ENCODE measurements at regions of chr6 and their contacts with region 1.

Region 1: DNA sequence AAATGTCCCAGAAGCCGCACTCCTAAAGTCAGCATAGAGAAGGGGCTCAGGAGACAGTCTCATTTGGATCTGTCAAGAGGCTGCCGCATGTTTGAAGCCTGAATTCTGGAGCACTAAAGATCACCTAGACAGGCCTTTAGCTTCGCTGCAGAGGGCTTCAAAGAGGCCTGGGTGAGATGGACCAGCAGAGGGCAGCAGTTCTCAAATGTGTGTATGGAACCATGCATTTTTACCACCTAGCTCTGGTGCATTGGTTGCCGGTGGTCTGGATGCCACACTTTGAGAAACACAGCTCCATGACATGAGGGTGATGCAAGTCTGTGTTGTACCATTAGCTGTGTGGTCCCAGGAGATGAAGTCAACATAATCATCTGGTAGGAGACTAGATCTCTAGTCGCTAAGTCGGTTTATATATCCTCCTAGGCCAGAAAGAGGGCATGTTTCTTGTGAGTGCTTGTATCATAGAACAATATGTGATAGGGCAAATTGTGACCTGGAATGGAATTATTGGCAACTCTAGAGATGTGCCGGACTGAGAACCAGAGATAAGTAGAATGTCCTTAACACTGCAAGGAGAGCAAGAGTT is 64.8 kb downstream of the KIAA0319 start:
- DNase-seq: peak; percentile 56 to 74 (median 66)
- H3K4me3 ChIP-seq: no peak overlapping the region
- H3K4me3 Mint-ChIP-seq: no peak overlapping the region
- H3K27ac ChIP-seq: no peak overlapping the region
- H3K27ac Mint-ChIP-seq: no peak overlapping the region
- H3K4me1 ChIP-seq: no peaks in the 10 kb centered on the region
- H3K4me1 Mint-ChIP-seq: peaks cover 0 to 3% (median under 1%) of the 10 kb centered on the region in 4 donors
- H3K27me3 ChIP-seq: no peaks in the 10 kb centered on the region
- H3K27me3 Mint-ChIP-seq: peaks cover 0 to 2% of the 10 kb centered on the region in 2 donors

Region 2: GRCh38 chr6:22631091-22631490 is 1950.1 kb before region 1 on chr6:
- CTCF ChIA-PET with region 1: no interaction called
- POLR2A ChIA-PET with region 1: no interaction called
- intact Hi-C with region 1: no loop called
- DNase-seq: no peak
- H3K4me3 ChIP-seq: no peak overlapping the region
- H3K4me3 Mint-ChIP-seq: no peak overlapping the region
- H3K27ac ChIP-seq: no peak overlapping the region
- H3K27ac Mint-ChIP-seq: no peak overlapping the region
- H3K4me1 ChIP-seq: no peaks in the 10 kb centered on the region
- H3K4me1 Mint-ChIP-seq: no peaks in the 10 kb centered on the region
- H3K27me3 ChIP-seq: no peaks in the 10 kb centered on the region
- H3K27me3 Mint-ChIP-seq: no peaks in the 10 kb centered on the region

Region 3: GRCh38 chr6:24566020-24566767 is 15.0 kb before region 1 on chr6:
- CTCF ChIA-PET with region 1: interaction called, 31 read pairs
- POLR2A ChIA-PET with region 1: no interaction called
- intact Hi-C with region 1: no loop called
- DNase-seq: no peak
- H3K4me3 ChIP-seq: no peak overlapping the region
- H3K4me3 Mint-ChIP-seq: no peak overlapping the region
- H3K27ac ChIP-seq: no peak overlapping the region
- H3K27ac Mint-ChIP-seq: no peak overlapping the region
- H3K4me1 ChIP-seq: no peaks in the 10 kb centered on the region
- H3K4me1 Mint-ChIP-seq: no peaks in the 10 kb centered on the region
- H3K27me3 ChIP-seq: no peaks in the 10 kb centered on the region
- H3K27me3 Mint-ChIP-seq: no peaks in the 10 kb centered on the region

Region 4: DNA sequence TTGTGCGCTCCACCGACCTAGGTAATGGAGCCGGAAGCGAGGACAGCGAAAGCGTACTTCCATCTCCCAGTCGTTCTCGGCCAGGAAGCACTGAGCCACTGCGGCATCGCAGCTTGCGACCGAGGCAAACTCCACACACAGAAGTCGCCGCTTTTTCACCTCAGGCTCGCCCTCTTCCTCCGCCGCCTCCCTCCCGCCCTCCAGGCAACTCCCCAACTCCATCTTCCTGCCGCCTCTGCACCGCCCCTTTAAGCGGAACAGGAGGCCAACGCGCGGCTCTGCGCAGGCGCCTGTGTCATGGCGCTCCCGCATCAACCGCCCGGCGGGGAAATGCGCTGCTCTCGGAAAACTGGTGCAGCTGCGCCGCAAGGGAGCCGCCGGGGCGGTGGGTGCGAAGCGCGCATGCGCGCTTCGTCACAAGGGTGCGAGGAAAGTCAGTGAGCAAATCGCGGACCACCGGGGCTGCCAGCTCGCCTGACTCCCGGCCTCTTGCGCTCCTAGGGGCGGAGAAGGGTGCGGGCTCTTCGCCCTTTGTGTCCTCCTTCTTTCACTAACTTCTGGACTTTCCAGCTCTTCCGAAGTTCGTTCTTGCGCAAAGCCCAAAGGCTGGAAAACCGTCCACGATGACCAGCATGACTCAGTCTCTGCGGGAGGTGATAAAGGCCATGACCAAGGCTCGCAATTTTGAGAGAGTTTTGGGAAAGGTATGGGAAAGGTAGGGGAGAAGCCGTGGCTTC is 85.6 kb after region 1 on chr6 and contains the starts of genes ACOT13 and TDP2:
- CTCF ChIA-PET with region 1: interaction called, 36 read pairs
- POLR2A ChIA-PET with region 1: interaction called, 6 read pairs
- intact Hi-C with region 1: no loop called
- DNase-seq: peak; percentile 97 to 98 (median 98)
- H3K4me3 ChIP-seq: peak within 1 kb of the TSS; percentile 79 to 97
- H3K4me3 Mint-ChIP-seq: peak within 1 kb of the TSS; percentile 96 to 100 (median 99)
- H3K27ac ChIP-seq: peak within 1 kb of the TSS; percentile 86
- H3K27ac Mint-ChIP-seq: peak within 1 kb of the TSS; percentile 95 to 100 (median 98)
- H3K4me1 ChIP-seq: peaks cover 43% of the 10 kb centered on the region
- H3K4me1 Mint-ChIP-seq: peaks cover 34 to 73% (median 51%) of the 10 kb centered on the region in 4 donors
- H3K27me3 ChIP-seq: no peaks in the 10 kb centered on the region
- H3K27me3 Mint-ChIP-seq: no peaks in the 10 kb centered on the region
- total RNA-seq, gene ACOT13: 11.1 to 12.5 TPM
- total RNA-seq, gene TDP2: 72.8 to 74.3 TPM

Region 5: GRCh38 chr6:24699521-24700359 is 118.6 kb after region 1 on chr6:
- CTCF ChIA-PET with region 1: interaction called, 185 read pairs
- POLR2A ChIA-PET with region 1: interaction called, 3 read pairs
- intact Hi-C with region 1: loop called (anchors 1 kb)
- DNase-seq: no peak
- H3K4me3 ChIP-seq: no peak overlapping the region
- H3K4me3 Mint-ChIP-seq: no peak overlapping the region
- H3K27ac ChIP-seq: no peak overlapping the region
- H3K27ac Mint-ChIP-seq: peak overlapping the region in 5 of 7 donors; percentile 19 to 82 (median 43)
- H3K4me1 ChIP-seq: no peaks in the 10 kb centered on the region
- H3K4me1 Mint-ChIP-seq: peaks cover 5 to 23% (median 13%) of the 10 kb centered on the region in 4 donors
- H3K27me3 ChIP-seq: no peaks in the 10 kb centered on the region
- H3K27me3 Mint-ChIP-seq: no peaks in the 10 kb centered on the region

Region 6: DNA sequence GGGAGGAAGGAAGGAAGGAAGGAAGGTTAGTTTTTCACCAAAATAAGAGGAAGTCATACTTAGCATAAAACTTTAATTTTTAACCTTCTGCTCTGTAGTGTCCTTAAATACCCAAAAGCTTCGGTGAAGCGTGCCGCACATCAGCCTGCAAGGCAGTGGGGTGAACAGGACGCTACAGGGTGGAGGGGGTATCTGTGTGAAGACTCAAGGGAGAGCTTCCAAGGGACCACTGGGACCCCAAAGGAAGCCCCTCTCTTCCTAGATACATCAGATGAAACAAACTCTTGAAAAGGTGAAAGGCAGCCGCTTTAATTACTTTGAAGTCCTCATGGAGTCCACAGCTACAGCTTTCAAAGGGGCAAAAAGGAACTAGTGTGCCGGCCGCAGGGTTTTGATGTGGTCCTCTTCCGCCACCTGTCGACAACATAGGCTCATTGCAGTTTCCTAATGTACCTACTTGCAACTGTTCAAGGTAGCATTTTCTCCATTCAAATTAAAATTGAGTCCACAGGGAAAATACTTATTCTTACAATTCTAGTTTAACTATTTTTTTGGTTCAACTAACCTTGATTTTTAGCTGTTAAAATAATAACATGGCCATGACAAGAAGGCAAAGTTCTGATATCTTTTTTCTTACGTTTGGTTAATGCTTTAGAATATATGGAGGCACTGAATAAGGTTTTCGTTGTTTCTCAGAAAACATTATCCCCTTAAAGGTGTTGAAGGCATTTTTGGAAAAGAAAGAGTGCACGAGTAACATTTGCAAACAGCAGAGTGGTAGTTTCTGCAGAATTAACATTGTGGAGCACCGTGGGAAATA is 489.6 kb after region 1 on chr6:
- CTCF ChIA-PET with region 1: interaction called, 3 read pairs
- POLR2A ChIA-PET with region 1: no interaction called
- intact Hi-C with region 1: loop called (anchors 1 kb)
- DNase-seq: peak; percentile 84 to 85 (median 85)
- H3K4me3 ChIP-seq: no peak overlapping the region
- H3K4me3 Mint-ChIP-seq: peak overlapping the region in 7 of 8 donors; percentile 5 to 74 (median 48)
- H3K27ac ChIP-seq: no peak overlapping the region
- H3K27ac Mint-ChIP-seq: peak overlapping the region; percentile 80 to 94 (median 84)
- H3K4me1 ChIP-seq: no peaks in the 10 kb centered on the region
- H3K4me1 Mint-ChIP-seq: peaks cover 4 to 8% (median 6%) of the 10 kb centered on the region in 4 donors
- H3K27me3 ChIP-seq: no peaks in the 10 kb centered on the region
- H3K27me3 Mint-ChIP-seq: no peaks in the 10 kb centered on the region

Measured in CD4-positive, alpha-beta memory T cell (primary cell).